ENCODE measurements at regions of chr17 and their contacts with region 1.

Region 1: GRCh38 chr17:48307814-48308411 is 122.1 kb downstream of the SKAP1 start:
- DNase-seq: peak; percentile 17
- H3K4me3 ChIP-seq: no peak overlapping the region
- CTCF ChIP-seq: peak; percentile 85

Region 2: DNA sequence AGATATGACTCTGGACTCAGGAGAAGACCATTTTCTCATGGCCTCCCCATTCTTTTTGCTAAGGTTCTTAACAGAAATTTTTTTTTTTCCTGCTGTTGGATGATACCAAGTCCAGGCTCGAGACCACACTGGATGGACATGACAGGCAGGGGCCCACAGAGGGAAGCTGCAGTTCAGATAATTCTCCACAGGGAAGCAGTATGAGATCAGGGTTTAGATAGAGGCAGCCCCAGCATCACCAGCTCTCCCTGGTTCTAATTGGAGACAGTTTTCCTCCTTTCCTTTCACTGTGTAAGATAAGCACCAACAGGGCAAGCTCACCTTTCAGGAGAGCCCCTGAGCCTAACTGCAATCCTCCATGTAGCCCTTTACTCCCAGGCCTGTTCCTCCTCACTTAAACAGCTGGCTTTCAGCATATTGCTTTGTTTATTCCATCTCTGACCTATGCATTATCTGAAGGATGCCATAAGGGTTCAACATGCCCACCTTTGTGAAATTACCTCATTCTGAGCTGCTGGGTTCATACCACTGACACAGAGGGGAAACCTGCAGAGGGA is 92.3 kb before region 1 on chr17:
- CTCF ChIA-PET with region 1: interaction called, 16 read pairs
- POLR2A ChIA-PET with region 1: no interaction called
- DNase-seq: no peak
- H3K4me3 ChIP-seq: no peak overlapping the region
- CTCF ChIP-seq: peak; percentile 57

Region 3: DNA sequence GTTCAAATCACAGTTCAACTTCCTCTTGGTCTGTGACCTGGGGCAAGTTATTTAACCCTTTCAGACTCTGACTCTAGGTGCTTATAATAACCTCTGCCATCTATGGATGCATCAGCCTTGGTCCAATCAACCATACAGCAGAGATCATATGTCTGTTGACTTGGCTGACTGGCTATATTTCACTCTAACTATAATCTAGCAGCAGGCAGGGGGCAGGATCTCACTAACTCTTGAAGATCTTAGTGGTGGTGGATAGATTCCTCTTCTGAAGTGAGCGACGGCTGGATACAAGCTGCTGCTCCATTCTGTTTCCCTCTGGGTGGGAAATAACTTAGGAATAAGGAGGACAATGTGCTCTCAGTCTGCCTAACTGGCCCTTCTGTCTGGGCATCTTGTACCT is 24.5 kb before region 1 on chr17:
- CTCF ChIA-PET with region 1: interaction called, 21 read pairs
- POLR2A ChIA-PET with region 1: no interaction called
- DNase-seq: no peak
- H3K4me3 ChIP-seq: no peak overlapping the region
- CTCF ChIP-seq: no peak

Region 4: GRCh38 chr17:48322060-48322459 is 14.1 kb after region 1 on chr17:
- CTCF ChIA-PET with region 1: interaction called, 24 read pairs
- POLR2A ChIA-PET with region 1: interaction called, 3 read pairs
- DNase-seq: no peak
- H3K4me3 ChIP-seq: no peak overlapping the region
- CTCF ChIP-seq: no peak

Region 5: DNA sequence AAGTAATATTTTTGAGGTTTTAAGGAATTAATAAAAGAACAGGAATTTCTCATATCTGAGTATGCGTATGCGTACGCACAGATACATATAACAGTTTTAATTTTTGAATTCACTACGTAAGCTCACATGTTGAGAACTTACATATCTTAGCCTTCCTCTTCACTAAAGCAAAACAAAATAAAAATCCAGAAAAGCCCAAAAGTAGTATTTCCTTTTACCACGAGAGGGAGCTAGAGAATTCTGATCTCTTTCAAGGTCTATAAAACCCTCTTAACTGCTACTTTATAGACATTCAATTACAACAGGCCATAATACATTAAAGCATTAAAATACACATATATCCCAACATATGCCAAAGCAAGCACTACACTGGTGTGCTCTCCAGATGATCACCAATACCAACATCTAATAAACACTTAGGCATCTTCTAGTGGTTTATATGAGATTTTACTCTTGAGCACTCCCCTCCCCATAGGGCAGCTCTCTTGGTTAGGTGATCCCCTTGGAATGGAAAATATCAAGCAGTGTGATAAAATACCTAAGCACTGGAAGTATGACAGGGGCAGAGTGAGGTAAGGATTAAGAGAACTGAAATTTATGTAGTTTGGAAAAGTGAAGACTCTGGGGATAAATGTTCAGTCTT is 28.1 kb after region 1 on chr17:
- CTCF ChIA-PET with region 1: interaction called, 33 read pairs
- POLR2A ChIA-PET with region 1: no interaction called
- DNase-seq: no peak
- H3K4me3 ChIP-seq: no peak overlapping the region
- CTCF ChIP-seq: peak; percentile 38

Region 6: DNA sequence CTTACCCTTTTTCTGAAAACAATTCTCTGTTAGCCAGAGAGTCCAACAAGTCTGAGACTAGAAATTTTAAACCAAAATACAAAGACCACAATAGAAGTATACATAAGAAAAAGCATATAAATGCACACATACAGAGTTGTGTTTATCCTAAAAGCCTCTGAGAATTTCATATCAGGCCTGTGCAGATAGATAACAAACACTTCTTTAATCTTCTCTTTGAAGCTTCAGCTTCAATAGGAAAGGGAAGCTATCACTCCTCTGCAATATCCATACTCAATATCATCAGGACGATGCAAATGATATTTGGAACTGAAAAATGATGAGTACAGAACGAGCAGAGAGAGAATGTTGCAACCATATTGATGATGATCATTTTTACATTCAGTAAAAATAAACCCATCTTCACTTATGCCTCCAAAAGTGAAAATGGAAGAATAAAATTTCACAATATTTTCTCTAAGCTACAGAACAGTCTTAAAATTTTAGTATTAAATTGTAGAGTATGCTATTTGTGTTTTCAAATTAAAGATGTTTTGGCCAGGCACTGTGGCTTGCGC is 60.5 kb after region 1 on chr17:
- CTCF ChIA-PET with region 1: no interaction called
- POLR2A ChIA-PET with region 1: no interaction called
- DNase-seq: no peak
- H3K4me3 ChIP-seq: no peak overlapping the region
- CTCF ChIP-seq: no peak

Region 7: DNA sequence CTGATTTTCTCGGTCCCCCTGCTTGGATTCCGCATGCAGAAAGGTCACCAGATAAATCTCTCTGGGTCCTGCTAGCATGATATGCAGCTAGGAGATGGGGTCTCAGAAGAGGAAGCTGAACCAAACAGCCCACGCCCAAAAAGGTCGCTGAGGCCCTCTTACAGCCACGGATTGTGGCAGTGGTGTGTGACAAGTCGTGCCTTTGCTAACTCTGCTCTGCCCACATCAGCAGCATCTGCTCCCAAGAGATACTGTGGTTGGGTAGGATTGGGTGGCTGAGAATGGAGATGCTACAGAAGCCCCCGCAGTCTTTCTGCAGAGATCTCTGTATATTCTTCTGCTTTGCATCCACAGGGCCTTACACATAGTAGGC is 137.3 kb after region 1 on chr17:
- CTCF ChIA-PET with region 1: no interaction called
- POLR2A ChIA-PET with region 1: no interaction called
- DNase-seq: no peak
- H3K4me3 ChIP-seq: no peak overlapping the region
- CTCF ChIP-seq: no peak

Region 8: GRCh38 chr17:48610282-48611211 is 302.6 kb after region 1 on chr17 and contains the start of gene HOXB7:
- CTCF ChIA-PET with region 1: interaction called, 119 read pairs
- POLR2A ChIA-PET with region 1: no interaction called
- DNase-seq: no peak
- H3K4me3 ChIP-seq: peak within 1 kb of the TSS; percentile 67
- CTCF ChIP-seq: no peak

Region 9: GRCh38 chr17:48625495-48626244 is 317.8 kb after region 1 on chr17:
- CTCF ChIA-PET with region 1: interaction called, 119 read pairs
- POLR2A ChIA-PET with region 1: no interaction called
- DNase-seq: no peak
- H3K4me3 ChIP-seq: peak overlapping the region; percentile 51
- CTCF ChIP-seq: no peak